Activated CD4-positive, alpha-beta T cell treated with anti-CD3 and anti-CD28 coated beads for 36 hours (primary cell): ENCODE measurements at regions of chr22 and their contacts with region 1.

Region 1: DNA sequence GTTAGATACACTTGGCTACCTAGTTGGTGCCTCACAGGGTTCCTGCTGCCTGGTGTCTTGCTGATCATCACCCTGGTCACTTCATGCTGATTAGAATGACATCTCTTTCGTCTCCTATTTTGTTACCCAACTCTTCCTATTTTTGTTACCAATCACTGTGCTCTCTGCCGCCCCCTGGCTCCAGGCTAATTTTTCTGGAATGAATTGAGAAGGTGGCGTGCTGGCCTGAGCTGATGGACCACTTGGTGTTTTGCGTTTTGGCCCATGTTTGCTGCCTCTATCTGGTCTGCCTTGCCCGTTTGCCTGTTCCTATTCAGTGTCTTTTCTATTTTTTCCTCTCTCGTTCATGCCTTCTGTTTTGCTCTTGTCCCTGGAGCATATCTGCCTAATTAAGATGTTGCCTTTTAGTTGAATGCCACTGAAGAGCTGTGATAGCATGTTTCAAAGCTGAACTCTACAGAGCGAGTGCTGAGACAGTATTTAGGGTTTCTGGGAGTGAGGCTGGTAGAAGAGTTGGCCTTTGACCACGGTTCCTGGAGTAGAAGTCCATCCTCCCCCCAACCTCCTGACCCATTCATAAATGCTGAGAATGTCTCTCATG is 5.9 kb upstream of the ATF4 start:
- DNase-seq: peak; percentile 72
- ATAC-seq: no peak
- H3K4me3 Mint-ChIP-seq: no peak overlapping the region
- H3K27ac Mint-ChIP-seq: peak overlapping the region; percentile 38
- H3K4me1 Mint-ChIP-seq: peaks cover 47% of the 10 kb centered on the region
- H3K27me3 Mint-ChIP-seq: no peaks in the 10 kb centered on the region

Region 2: GRCh38 chr22:39490135-39490798 is 24.2 kb before region 1 on chr22:
- CTCF ChIA-PET with region 1: interaction called, 27 read pairs
- POLR2A ChIA-PET with region 1: interaction called, 7 read pairs
- intact Hi-C with region 1: no loop called
- DNase-seq: peak; percentile 89
- ATAC-seq: peak; percentile 100
- H3K4me3 Mint-ChIP-seq: no peak overlapping the region
- H3K27ac Mint-ChIP-seq: no peak overlapping the region
- H3K4me1 Mint-ChIP-seq: peaks cover 7% of the 10 kb centered on the region
- H3K27me3 Mint-ChIP-seq: no peaks in the 10 kb centered on the region

Region 3: DNA sequence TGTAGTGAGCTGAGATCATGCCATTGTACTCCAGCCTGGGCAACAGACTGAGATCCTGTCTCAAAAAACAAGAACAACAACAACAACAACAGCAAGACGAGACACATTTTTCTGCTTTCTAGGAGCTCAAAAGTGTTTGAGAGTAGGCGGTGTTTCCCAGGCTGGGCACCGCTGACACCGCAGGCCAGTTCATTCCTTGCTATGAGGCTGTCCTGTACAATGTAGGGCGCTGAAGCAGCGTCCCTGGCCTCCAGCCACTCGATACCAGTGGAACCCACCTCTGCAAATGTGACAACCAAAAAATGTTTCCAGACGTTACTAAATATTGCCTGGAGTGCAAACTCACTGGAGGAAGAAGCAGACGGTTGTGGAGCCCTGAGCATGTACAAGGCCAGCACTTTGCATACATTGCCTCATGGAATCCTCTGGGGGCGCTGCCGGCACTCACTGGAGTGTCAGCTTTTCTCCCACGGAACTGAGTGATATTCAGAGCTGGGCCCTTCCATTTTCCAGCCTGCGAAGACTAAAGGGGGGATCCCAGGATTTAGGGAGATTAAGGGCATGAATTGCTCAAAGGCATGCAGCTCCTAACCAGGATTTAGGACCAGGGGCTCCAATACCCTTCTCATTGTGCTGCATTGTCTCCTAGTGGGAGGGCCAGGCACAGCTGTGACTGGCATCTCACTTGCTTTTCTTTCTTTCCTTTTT is 18.2 kb before region 1 on chr22:
- CTCF ChIA-PET with region 1: interaction called, 27 read pairs
- POLR2A ChIA-PET with region 1: interaction called, 6 read pairs
- intact Hi-C with region 1: no loop called
- DNase-seq: peak; percentile 85
- ATAC-seq: peak; percentile 89
- H3K4me3 Mint-ChIP-seq: no peak overlapping the region
- H3K27ac Mint-ChIP-seq: no peak overlapping the region
- H3K4me1 Mint-ChIP-seq: peaks cover 13% of the 10 kb centered on the region
- H3K27me3 Mint-ChIP-seq: no peaks in the 10 kb centered on the region